AG04450 (cell line): ENCODE measurements at regions of chr7 and their contacts with region 1.

Region 1: DNA sequence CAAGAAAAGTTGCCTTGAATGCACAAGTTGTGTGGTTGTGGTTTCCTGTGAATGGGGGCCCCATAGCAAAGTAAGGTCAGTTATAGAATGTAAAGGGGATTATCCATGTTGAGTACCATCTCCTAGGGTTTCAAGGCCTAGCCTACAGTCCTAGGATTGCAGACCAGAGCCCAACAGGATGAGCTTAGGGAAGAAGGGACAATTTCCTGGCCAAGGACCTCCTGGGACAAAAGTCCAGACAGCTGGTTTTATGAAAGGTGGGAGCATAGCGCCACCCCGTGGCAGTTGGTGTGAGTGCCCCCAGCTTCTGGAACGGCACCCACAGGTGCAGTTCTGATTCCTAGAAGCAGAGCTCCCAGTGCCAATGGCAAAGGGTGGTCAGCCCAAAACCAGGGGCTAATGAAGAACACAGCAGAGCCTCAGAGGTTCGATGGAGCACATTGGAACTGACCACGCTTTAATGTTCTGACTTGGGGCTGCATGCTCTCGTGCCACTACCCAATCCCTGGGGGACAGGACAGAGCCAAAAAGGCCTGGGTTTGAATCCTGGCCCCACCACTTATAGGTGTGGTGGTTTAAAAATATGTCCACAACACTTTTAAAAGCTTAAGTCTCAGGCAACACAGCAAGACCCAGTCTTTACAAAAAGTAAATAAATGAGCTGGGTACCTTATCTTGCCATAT is 25.8 kb upstream of the TMEM120A start:
- DNase-seq: peak; percentile 8
- H3K4me3 ChIP-seq: no peak overlapping the region
- H3K27ac ChIP-seq: no peak overlapping the region
- H3K27me3 ChIP-seq: no peaks in the 10 kb centered on the region
- CTCF ChIP-seq: peak; percentile 93

Region 2: DNA sequence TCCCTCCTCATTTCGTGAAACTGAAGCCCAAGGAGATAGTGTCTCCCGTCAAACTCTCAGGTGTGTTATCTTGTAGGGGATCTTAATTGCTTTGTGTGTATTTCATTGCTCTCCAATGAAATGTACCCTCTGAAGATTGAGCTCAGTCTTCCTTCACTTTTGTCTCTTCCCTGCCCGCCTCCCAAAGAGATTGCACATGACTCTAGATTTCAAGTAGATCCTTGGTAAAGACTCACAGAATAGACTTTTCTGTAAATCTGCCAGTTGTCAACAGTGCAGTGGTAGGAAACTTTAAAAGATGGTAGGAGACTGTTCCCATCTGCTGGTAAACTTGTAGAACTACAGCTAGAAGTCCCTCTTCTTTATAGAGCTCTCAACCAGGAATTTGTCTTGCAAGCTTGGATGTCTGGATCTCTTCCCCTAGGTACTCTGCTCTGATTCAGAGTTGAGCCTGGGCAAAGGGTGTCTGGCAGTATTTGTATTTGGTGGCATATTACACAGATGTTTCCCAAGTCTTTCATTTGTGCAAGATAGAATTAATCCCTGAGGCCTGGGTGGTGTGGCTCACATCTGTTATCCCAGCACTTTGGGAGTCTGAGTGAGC is 257.8 kb before region 1 on chr7:
- CTCF ChIA-PET with region 1: interaction called, 19 read pairs
- POLR2A ChIA-PET with region 1: no interaction called
- DNase-seq: peak; percentile 61
- H3K4me3 ChIP-seq: no peak overlapping the region
- H3K27ac ChIP-seq: no peak overlapping the region
- H3K27me3 ChIP-seq: no peaks in the 10 kb centered on the region
- CTCF ChIP-seq: peak; percentile 83

Region 3: GRCh38 chr7:75866489-75867389 is 153.4 kb before region 1 on chr7:
- CTCF ChIA-PET with region 1: interaction called, 49 read pairs
- POLR2A ChIA-PET with region 1: interaction called, 4 read pairs
- DNase-seq: no peak
- H3K4me3 ChIP-seq: no peak overlapping the region
- H3K27ac ChIP-seq: no peak overlapping the region
- H3K27me3 ChIP-seq: no peaks in the 10 kb centered on the region
- CTCF ChIP-seq: peak; percentile 93

Region 4: GRCh38 chr7:75985518-75986146 is 34.5 kb before region 1 on chr7:
- CTCF ChIA-PET with region 1: no interaction called
- POLR2A ChIA-PET with region 1: no interaction called
- DNase-seq: no peak
- H3K4me3 ChIP-seq: no peak overlapping the region
- H3K27ac ChIP-seq: no peak overlapping the region
- H3K27me3 ChIP-seq: no peaks in the 10 kb centered on the region
- CTCF ChIP-seq: no peak

Region 5: DNA sequence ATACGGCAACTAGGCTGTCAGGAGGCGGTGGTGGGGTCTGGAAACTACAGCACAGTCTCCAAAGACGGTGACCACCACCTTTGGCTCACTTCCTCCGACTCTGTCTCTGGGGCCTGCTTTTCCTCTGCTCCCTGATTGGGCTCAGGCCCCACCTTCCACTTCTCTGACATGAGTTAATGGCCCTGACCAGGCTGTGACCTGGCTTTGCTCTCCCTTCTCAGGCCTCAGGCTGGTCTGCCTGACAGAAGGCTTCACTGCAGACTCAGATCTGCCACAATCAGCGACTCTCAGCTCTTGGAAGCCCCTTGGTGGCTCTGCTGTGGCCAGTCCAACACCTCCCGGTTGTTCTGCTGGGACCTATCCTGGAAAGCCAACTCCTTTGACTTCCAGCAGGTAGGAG is 20.0 kb after region 1 on chr7:
- CTCF ChIA-PET with region 1: interaction called, 10 read pairs
- POLR2A ChIA-PET with region 1: interaction called, 3 read pairs
- DNase-seq: no peak
- H3K4me3 ChIP-seq: no peak overlapping the region
- H3K27ac ChIP-seq: no peak overlapping the region
- H3K27me3 ChIP-seq: no peaks in the 10 kb centered on the region
- CTCF ChIP-seq: no peak